Heart left ventricle (tissue), 16 donors: ENCODE measurements at regions of chr1 and their contacts with region 1.

Region 1: GRCh38 chr1:143584508-143584907 is 387.3 kb downstream of the FAM72C start:
- DNase-seq: no peak
- ATAC-seq: no peak
- H3K4me3 ChIP-seq: no peak overlapping the region
- H3K27ac ChIP-seq: no peak overlapping the region
- H3K4me1 ChIP-seq: no peaks in the 10 kb centered on the region
- H3K27me3 ChIP-seq: peaks cover 0 to 8% (median 0%) of the 10 kb centered on the region in 9 donors
- CTCF ChIP-seq: no peak
- POLR2A ChIP-seq: no peak

Region 2: DNA sequence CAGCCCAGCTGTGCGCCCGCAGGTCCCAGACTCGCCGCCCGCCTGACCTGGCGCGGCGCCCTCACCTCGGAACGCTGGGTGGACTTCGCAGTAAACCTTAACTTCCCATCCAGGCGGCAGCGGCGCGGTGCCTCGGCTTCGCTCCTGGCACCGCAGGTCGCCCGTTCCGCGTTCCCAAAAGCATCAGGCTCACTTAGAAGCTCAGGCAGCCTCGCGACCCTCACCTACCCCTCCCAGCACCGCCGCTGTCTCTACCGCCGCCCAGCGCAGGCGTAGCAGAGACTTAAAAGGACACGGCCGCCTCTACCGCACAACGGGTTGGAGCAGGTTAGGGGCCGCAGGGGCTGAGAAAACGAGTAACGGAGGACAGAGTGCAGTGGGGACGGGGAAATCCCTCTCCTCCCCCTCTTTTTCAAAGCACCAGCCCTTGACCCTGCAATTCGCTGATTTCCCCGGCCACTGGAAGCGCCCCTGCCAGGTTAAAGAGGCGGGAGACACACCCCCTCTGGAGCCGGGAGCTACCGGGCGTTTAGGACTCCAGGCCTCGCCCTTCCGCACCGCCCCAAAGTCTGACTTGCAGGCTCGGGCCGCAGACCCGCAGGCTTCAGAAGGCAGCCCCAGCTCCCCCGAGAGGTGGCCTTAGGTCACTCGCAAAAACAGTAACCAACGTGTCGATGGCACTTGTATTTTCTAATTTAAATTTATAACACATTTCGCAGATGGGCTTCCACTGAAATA is 58.8 kb after region 1 on chr1:
- intact Hi-C with region 1: loop called in 1 of 10 experiments (anchors 10 kb)
- DNase-seq: no peak
- ATAC-seq: peak in 1 of 4 donors; percentile 55
- H3K4me3 ChIP-seq: peak overlapping the region in 3 of 12 donors; percentile 3 to 15 (median 9)
- H3K27ac ChIP-seq: no peak overlapping the region
- H3K4me1 ChIP-seq: no peaks in the 10 kb centered on the region
- H3K27me3 ChIP-seq: peaks cover 0 to 84% (median 39%) of the 10 kb centered on the region in 9 donors
- CTCF ChIP-seq: no peak
- POLR2A ChIP-seq: no peak

Region 3: DNA sequence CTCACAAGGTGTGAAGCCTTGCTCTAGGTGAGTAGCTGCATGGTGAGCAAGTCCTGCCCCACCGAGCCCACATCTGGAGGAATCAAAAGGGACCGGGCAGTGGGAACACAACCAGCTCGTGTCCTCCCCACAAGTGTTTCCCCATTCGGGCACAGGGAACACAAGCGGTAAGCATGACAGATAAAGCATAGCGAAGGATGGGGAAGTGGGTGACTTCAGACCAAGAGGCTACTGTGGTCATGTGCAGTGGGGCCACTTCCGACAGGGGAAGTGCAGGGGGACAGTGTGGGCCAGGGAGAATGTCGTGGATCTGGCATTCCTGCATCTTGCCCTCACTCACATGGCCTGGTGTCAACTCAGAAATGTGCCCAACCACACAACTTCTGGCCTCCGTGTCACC is 81.1 kb after region 1 on chr1:
- intact Hi-C with region 1: no loop called
- DNase-seq: no peak
- ATAC-seq: peak in 1 of 4 donors; percentile 10
- H3K4me3 ChIP-seq: no peak overlapping the region
- H3K27ac ChIP-seq: no peak overlapping the region
- H3K4me1 ChIP-seq: peaks cover 0 to 8% (median 0%) of the 10 kb centered on the region in 12 donors
- H3K27me3 ChIP-seq: peaks cover 0 to 90% (median 64%) of the 10 kb centered on the region in 9 donors
- CTCF ChIP-seq: no peak
- POLR2A ChIP-seq: no peak